B cell (primary cell): ENCODE measurements at regions of chr14 and their contacts with region 1.

Region 1: GRCh38 chr14:70714055-70714621 is 72.4 kb downstream of the TTC9 start:
- DNase-seq: peak; percentile 80
- ATAC-seq: peak; percentile 31
- H3K4me3 ChIP-seq: no peak overlapping the region
- H3K4me3 Mint-ChIP-seq: peak overlapping the region; percentile 0
- H3K27ac ChIP-seq: no peak overlapping the region
- H3K27ac Mint-ChIP-seq: peak overlapping the region; percentile 0
- H3K4me1 ChIP-seq: peaks cover 21 to 26% of the 10 kb centered on the region in 2 donors
- H3K4me1 Mint-ChIP-seq: peaks cover 37% of the 10 kb centered on the region
- H3K27me3 ChIP-seq: no peaks in the 10 kb centered on the region
- H3K27me3 Mint-ChIP-seq: no peaks in the 10 kb centered on the region
- CTCF ChIP-seq: peak; percentile 91

Region 2: DNA sequence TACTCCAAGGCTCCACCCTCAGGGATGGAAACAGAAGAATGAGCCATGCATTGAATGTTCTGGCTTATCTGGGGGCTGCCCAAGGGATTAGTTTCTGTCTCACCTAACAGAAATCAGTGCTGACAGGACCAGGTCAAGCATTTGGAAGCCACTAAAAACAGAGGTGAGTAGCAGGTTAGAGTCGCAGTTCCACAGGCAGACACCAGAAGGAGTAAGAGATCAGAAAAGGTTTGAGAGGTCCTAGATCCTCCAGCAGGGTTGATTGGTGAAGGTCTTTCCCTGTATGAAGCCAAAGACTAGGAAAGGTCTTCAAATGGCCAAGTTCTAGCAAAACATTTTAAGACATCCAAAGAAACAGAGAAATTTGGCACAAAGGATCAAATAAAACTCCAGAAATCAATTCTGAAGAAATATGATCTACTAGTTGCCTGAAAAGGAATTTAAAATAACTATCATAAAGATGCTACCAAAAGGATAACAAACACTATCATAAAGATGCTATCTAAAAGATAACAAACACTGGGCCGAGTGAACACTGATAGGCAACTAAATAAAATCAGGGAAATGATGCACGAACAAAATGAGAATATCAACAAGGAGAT is 91.9 kb before region 1 on chr14:
- CTCF ChIA-PET with region 1: interaction called, 236 read pairs
- POLR2A ChIA-PET with region 1: interaction called, 3 read pairs
- intact Hi-C with region 1: loop called (anchors 1 kb)
- DNase-seq: peak; percentile 73
- ATAC-seq: peak; percentile 82
- H3K4me3 ChIP-seq: no peak overlapping the region
- H3K4me3 Mint-ChIP-seq: no peak overlapping the region
- H3K27ac ChIP-seq: no peak overlapping the region
- H3K27ac Mint-ChIP-seq: no peak overlapping the region
- H3K4me1 ChIP-seq: peaks cover 7 to 10% of the 10 kb centered on the region in 2 donors
- H3K4me1 Mint-ChIP-seq: peaks cover 22% of the 10 kb centered on the region
- H3K27me3 ChIP-seq: no peaks in the 10 kb centered on the region
- H3K27me3 Mint-ChIP-seq: no peaks in the 10 kb centered on the region
- CTCF ChIP-seq: peak; percentile 85

Region 3: GRCh38 chr14:70640938-70641547 is 73.1 kb before region 1 on chr14:
- CTCF ChIA-PET with region 1: interaction called, 43 read pairs
- POLR2A ChIA-PET with region 1: interaction called, 6 read pairs
- intact Hi-C with region 1: loop called (anchors 1 kb)
- DNase-seq: peak; percentile 77
- ATAC-seq: peak; percentile 60
- H3K4me3 ChIP-seq: peak overlapping the region; percentile 43 to 89 (median 85)
- H3K4me3 Mint-ChIP-seq: peak overlapping the region; percentile 100
- H3K27ac ChIP-seq: peak overlapping the region; percentile 53 to 57
- H3K27ac Mint-ChIP-seq: peak overlapping the region; percentile 99
- H3K4me1 ChIP-seq: peaks cover 55 to 59% of the 10 kb centered on the region in 2 donors
- H3K4me1 Mint-ChIP-seq: peaks cover 70% of the 10 kb centered on the region
- H3K27me3 ChIP-seq: no peaks in the 10 kb centered on the region
- H3K27me3 Mint-ChIP-seq: no peaks in the 10 kb centered on the region
- CTCF ChIP-seq: no peak

Region 4: GRCh38 chr14:70689726-70690125 is 24.4 kb before region 1 on chr14:
- CTCF ChIA-PET with region 1: interaction called, 14 read pairs
- POLR2A ChIA-PET with region 1: no interaction called
- intact Hi-C with region 1: no loop called
- DNase-seq: no peak
- ATAC-seq: no peak
- H3K4me3 ChIP-seq: no peak overlapping the region
- H3K4me3 Mint-ChIP-seq: no peak overlapping the region
- H3K27ac ChIP-seq: no peak overlapping the region
- H3K27ac Mint-ChIP-seq: no peak overlapping the region
- H3K4me1 ChIP-seq: no peaks in the 10 kb centered on the region
- H3K4me1 Mint-ChIP-seq: no peaks in the 10 kb centered on the region
- H3K27me3 ChIP-seq: no peaks in the 10 kb centered on the region
- H3K27me3 Mint-ChIP-seq: no peaks in the 10 kb centered on the region
- CTCF ChIP-seq: no peak

Region 5: GRCh38 chr14:70809543-70810244 is 95.6 kb after region 1 on chr14:
- CTCF ChIA-PET with region 1: interaction called, 52 read pairs
- POLR2A ChIA-PET with region 1: no interaction called
- intact Hi-C with region 1: no loop called
- DNase-seq: peak; percentile 93
- ATAC-seq: peak; percentile 86
- H3K4me3 ChIP-seq: peak overlapping the region; percentile 48 to 85 (median 74)
- H3K4me3 Mint-ChIP-seq: no peak overlapping the region
- H3K27ac ChIP-seq: peak overlapping the region; percentile 22 to 65
- H3K27ac Mint-ChIP-seq: peak overlapping the region; percentile 87
- H3K4me1 ChIP-seq: peaks cover 16 to 24% of the 10 kb centered on the region in 2 donors
- H3K4me1 Mint-ChIP-seq: peaks cover 14% of the 10 kb centered on the region
- H3K27me3 ChIP-seq: no peaks in the 10 kb centered on the region
- H3K27me3 Mint-ChIP-seq: no peaks in the 10 kb centered on the region
- CTCF ChIP-seq: no peak

Region 6: GRCh38 chr14:70821584-70822529 is 107.7 kb after region 1 on chr14:
- CTCF ChIA-PET with region 1: interaction called, 52 read pairs
- POLR2A ChIA-PET with region 1: no interaction called
- intact Hi-C with region 1: loop called (anchors 1 kb)
- DNase-seq: peak; percentile 58
- ATAC-seq: peak; percentile 7
- H3K4me3 ChIP-seq: peak overlapping the region; percentile 52 to 72 (median 61)
- H3K4me3 Mint-ChIP-seq: peak overlapping the region; percentile 79
- H3K27ac ChIP-seq: peak overlapping the region in 1 of 2 donors; percentile 19
- H3K27ac Mint-ChIP-seq: no peak overlapping the region
- H3K4me1 ChIP-seq: peaks cover 22 to 26% of the 10 kb centered on the region in 2 donors
- H3K4me1 Mint-ChIP-seq: peaks cover 18% of the 10 kb centered on the region
- H3K27me3 ChIP-seq: peaks cover 0 to 49% (median 30%) of the 10 kb centered on the region in 4 experiments
- H3K27me3 Mint-ChIP-seq: peaks cover 42% of the 10 kb centered on the region
- CTCF ChIP-seq: no peak

Region 7: DNA sequence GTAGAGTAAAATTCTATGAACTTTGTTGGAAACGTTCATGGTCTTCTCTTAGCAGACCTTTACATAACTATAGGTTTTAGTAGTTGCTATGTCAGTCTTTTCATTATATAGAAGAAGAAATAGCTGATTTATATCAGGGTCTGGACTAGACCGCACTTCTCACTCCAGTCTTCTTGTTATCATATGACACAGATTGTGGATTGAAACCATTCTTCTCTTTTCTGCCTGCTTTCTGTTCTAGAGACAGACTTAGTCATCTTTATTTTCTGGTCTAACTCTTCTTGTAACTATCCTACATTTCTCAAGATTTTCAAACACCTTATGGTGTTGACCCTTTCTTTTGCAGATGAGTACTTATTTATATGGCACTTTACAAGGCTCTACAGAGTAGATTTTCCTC is 248.8 kb after region 1 on chr14:
- CTCF ChIA-PET with region 1: no interaction called
- POLR2A ChIA-PET with region 1: no interaction called
- intact Hi-C with region 1: no loop called
- DNase-seq: no peak
- ATAC-seq: no peak
- H3K4me3 ChIP-seq: no peak overlapping the region
- H3K4me3 Mint-ChIP-seq: no peak overlapping the region
- H3K27ac ChIP-seq: no peak overlapping the region
- H3K27ac Mint-ChIP-seq: no peak overlapping the region
- H3K4me1 ChIP-seq: no peaks in the 10 kb centered on the region
- H3K4me1 Mint-ChIP-seq: no peaks in the 10 kb centered on the region
- H3K27me3 ChIP-seq: no peaks in the 10 kb centered on the region
- H3K27me3 Mint-ChIP-seq: no peaks in the 10 kb centered on the region
- CTCF ChIP-seq: no peak